ENCODE measurements at regions of chr19 and their contacts with region 1.

Region 1: GRCh38 chr19:41876847-41877832 is at the start of gene CD79A:
- DNase-seq: peak in 1 of 2 donors; percentile 23
- ATAC-seq: no peak
- H3K4me3 ChIP-seq: no peak within 1 kb of the TSS
- H3K27ac ChIP-seq: no peak within 1 kb of the TSS
- H3K4me1 ChIP-seq: no peaks in the 10 kb centered on the region
- H3K27me3 ChIP-seq: no peaks in the 10 kb centered on the region
- CTCF ChIP-seq: no peak
- total RNA-seq, gene CD79A: 0.30 to 1.4 (median 0.91) TPM

Region 2: DNA sequence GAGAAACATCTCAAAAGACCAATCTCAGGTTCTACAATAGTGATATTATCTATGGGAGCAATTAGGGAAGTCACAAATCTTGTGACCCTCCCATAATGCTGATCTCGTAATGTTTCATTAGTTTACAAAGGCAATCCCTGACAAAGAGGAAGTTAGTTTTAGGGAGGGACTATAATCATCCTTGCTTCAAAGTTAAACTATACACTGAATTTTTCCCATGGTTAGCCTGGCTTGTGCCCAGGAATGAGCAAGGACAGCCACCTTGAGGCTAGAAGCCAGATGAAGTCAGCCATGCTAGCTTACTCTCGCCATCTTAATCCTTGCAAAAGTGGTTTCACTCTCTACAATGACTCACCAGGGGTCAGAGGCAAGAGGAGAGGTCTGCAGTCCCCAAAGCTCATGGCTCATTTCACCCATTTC is 75.3 kb before region 1 on chr19:
- intact Hi-C with region 1: no loop called
- DNase-seq: no peak
- ATAC-seq: no peak
- H3K4me3 ChIP-seq: no peak overlapping the region
- H3K27ac ChIP-seq: no peak overlapping the region
- H3K4me1 ChIP-seq: no peaks in the 10 kb centered on the region
- H3K27me3 ChIP-seq: peaks cover 0 to 5% (median 0%) of the 10 kb centered on the region in 3 donors
- CTCF ChIP-seq: no peak

Region 3: DNA sequence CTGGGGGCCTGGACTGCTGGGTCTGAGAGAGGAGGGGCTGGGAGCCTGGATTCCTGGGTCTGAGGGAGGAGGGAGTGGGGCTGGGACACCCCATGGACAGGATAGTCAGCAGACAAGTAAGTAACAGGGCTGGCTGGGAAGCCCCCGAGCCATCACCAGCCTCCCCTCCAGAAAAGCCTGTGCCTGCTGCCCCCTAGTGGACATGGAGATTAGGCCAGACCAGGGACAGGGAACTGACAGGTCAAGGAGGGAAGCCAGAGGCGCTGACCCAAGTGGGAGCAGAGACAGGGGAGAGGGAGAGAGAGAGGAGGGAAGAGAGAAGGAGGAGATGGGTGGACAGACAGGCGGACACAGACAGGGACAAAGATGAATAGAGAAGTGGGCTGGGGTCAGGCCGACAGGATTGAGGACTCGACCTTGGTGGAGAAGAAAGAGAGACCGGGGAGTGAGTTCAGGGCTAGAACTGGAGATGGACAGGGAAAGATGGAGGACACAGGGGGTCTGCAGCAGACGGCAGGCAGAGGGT is 57.8 kb after region 1 on chr19:
- intact Hi-C with region 1: loop called in 1 of 2 experiments (anchors 5 kb)
- DNase-seq: peak; percentile 58 to 75
- ATAC-seq: peak; percentile 53 to 80 (median 66)
- H3K4me3 ChIP-seq: no peak overlapping the region
- H3K27ac ChIP-seq: no peak overlapping the region
- H3K4me1 ChIP-seq: no peaks in the 10 kb centered on the region
- H3K27me3 ChIP-seq: peaks cover 0 to 72% (median 29%) of the 10 kb centered on the region in 3 donors
- CTCF ChIP-seq: peak; percentile 67